ENCODE measurements at regions of chr6 and their contacts with region 1.

Region 1: DNA sequence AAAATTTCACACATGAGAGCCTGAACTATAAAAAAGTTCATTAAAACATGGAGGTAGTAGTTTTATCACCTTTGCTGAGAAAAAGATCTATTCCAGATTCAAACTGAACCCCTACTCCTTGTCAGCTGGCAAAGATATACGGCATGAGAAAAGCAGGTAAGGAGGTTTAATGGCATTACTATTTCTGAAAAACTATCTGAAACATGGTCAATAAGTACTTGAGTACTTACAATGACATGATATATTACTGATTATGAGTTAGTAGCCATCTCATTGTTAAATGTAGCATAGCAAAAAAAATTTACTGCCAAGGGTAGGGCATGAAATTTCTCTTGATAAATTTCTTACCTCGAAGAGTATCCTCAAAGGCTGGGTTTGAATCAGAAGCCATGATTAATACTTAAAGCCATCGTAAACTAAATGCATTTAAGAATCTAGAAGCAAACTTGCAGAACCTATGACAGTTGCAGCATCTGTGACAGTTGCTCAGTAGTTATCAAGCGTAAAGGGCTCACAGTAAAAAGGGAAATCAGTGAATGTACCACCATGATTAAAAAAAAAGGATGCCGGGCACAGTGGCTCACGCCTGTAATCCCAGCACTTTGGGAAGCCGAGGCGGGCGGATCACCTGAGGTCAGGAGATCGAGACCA is 8.7 kb downstream of the SLC17A5 start:
- DNase-seq: no peak
- ATAC-seq: peak; percentile 15; the same call in 1 of the 2 replicates
- H3K4me3 ChIP-seq: peak overlapping the region; percentile 47 to 64
- H3K27ac ChIP-seq: peak overlapping the region; percentile 78
- H3K4me1 ChIP-seq: peaks cover 8% of the 10 kb centered on the region; the same call in 1 of the 2 replicates
- H3K27me3 ChIP-seq: no peaks in the 10 kb centered on the region
- CTCF ChIP-seq: no peak

Region 2: DNA sequence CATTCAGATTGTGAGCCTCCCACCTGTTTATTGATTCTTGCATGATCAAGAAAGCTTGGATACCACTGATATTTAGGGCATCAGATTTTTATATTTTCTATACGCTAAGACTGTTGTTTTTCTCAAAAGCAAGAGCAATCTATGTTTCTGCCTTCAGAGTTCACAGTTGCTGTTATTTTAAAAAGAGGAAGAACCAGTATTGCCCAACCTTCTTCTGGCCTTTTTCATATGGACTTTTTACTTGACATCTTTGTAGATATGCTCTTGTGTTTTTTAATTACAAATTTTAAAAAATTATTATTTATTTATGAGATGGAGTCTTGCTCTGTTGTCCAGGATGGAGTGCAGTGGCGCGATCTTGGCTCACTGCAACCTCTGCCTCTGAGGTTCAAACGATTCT is 20.2 kb before region 1 on chr6:
- CTCF ChIA-PET with region 1: no interaction called
- POLR2A ChIA-PET with region 1: interaction called, 14 read pairs
- in situ Hi-C with region 1: no loop called
- intact Hi-C with region 1: no loop called
- DNase-seq: no peak
- ATAC-seq: no peak
- H3K4me3 ChIP-seq: no peak overlapping the region
- H3K27ac ChIP-seq: no peak overlapping the region
- H3K4me1 ChIP-seq: no peaks in the 10 kb centered on the region
- H3K27me3 ChIP-seq: no peaks in the 10 kb centered on the region
- CTCF ChIP-seq: no peak

Measured in Panc1 (cell line).